HEK293 (cell line): ENCODE measurements at regions of chr11 and their contacts with region 1.

Region 1: DNA sequence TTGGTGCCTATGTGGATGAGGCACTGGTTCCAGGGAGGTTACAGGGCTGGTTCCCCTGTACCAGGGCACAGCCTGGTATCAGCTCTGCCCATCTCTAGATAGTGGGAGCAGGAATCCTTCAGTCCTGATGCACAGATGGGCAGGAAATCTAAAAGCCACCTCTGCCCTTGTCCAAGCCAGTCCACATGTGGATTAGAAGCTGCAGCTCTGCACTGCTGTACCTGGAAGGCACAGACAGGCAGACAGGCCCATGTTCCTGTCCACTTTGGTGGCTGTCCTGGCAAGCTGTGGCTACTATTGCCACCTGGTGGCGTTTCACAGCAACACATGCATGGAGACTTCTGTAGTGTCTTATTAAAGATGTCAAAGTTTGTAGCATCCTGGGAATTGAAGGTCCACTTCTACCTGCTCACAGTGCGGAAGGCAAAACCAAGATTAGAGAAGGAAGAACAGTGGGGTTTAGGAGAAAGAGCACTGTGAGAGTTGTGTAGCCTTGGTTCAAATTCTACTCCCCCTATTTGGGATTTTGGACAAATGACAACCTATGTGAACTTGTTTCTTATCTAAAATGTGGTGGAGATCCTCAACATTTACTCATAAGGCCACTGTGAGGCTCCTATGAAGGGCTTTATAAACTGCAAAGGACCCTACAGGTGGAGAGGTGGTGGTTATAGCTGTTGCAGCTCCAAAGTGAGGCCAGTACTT is 30.1 kb downstream of the NAV2 start:
- H3K4me3 ChIP-seq: no peak overlapping the region
- H3K27ac ChIP-seq: no peak overlapping the region
- H3K4me1 ChIP-seq: no peaks in the 10 kb centered on the region
- CTCF ChIP-seq: peak; percentile 58; the same call in 1 of the 2 replicates

Region 2: GRCh38 chr11:19561011-19561410 is 181.7 kb before region 1 on chr11:
- CTCF ChIA-PET with region 1: interaction called, 99 read pairs
- POLR2A ChIA-PET with region 1: no interaction called
- H3K4me3 ChIP-seq: no peak overlapping the region
- H3K27ac ChIP-seq: no peak overlapping the region
- H3K4me1 ChIP-seq: no peaks in the 10 kb centered on the region
- CTCF ChIP-seq: no peak

Region 3: DNA sequence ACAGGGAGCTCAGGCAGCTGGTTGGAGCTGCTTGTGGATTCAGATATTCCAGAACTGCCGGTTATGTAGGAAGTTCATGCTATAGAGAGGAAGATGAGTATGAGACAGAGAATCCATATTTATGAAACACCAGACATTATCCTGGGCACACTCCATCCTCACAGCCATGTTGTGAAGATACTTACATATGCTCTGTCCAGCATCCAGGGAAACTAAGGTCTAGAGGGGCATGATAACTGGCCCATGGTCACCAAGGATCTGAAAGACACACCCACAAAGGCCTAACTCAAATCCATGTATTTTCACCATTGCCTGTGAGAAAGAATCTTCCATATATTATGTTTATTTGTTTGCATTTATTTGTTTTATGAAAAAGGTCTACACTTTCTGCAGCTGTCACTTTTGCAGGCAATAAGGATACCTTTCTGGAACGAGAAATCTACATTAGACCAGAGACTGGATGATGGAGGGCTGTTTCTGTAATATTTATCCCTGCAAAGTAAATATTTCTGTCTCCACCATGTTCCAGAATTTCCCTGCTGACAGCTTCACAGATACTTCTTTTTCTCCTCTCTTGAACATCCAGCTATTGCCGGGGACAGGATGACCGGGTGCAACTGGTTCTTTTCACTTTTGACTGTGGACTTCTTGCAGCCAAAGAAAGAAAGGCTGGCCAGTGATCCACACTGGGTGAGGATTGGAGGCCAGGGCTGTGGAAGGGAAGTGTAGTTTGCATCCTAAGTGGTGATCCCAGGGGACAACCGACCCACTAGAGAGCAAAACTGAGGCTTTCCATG is 176.0 kb before region 1 on chr11:
- CTCF ChIA-PET with region 1: interaction called, 99 read pairs
- POLR2A ChIA-PET with region 1: no interaction called
- H3K4me3 ChIP-seq: no peak overlapping the region
- H3K27ac ChIP-seq: no peak overlapping the region
- H3K4me1 ChIP-seq: no peaks in the 10 kb centered on the region
- CTCF ChIP-seq: no peak

Region 4: GRCh38 chr11:19577976-19578619 is 164.6 kb before region 1 on chr11:
- CTCF ChIA-PET with region 1: interaction called, 14 read pairs
- POLR2A ChIA-PET with region 1: no interaction called
- H3K4me3 ChIP-seq: no peak overlapping the region
- H3K27ac ChIP-seq: no peak overlapping the region
- H3K4me1 ChIP-seq: no peaks in the 10 kb centered on the region
- CTCF ChIP-seq: no peak

Region 5: DNA sequence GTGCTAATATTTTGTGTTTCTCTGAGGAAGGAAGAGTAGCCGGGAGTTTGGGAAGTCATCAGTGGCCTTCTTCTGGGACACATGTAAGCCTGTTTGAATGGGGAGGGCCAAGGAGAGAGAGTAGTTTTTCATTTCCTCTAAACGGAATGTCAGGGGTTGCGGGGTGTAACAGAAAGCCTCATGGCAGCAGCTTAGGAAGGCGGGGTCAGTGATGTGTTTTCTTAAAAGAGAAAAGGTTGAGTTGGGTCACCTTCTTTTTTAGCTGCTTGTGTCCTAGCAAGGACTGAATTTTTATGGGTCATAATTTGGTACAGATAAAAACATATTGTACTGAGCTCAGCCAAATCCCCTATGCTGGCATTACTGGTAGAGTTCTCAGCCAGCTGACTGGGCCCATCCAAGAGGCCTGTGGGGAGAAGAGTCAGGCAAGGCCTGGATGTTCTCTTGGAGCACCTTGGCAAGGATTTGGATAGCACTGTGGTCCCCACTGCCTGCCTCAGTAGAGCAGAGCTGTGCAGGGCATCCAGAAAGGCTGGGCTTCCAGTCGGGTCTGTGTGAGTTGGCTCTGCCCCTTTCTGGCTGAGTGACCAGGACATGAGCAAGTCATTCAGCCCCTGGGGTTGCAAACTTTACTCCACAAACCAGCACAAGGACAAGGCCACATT is 59.5 kb before region 1 on chr11:
- CTCF ChIA-PET with region 1: no interaction called
- POLR2A ChIA-PET with region 1: no interaction called
- H3K4me3 ChIP-seq: no peak overlapping the region
- H3K27ac ChIP-seq: no peak overlapping the region
- H3K4me1 ChIP-seq: no peaks in the 10 kb centered on the region
- CTCF ChIP-seq: no peak

Region 6: GRCh38 chr11:19727246-19727645 is 15.5 kb before region 1 on chr11:
- CTCF ChIA-PET with region 1: interaction called, 13 read pairs
- POLR2A ChIA-PET with region 1: no interaction called
- H3K4me3 ChIP-seq: no peak overlapping the region
- H3K27ac ChIP-seq: no peak overlapping the region
- H3K4me1 ChIP-seq: no peaks in the 10 kb centered on the region
- CTCF ChIP-seq: no peak